Activated CD4-positive, alpha-beta T cell treated with anti-CD3 and anti-CD28 coated beads for 36 hours (primary cell): ENCODE measurements at regions of chr2 and their contacts with region 1.

Region 1: GRCh38 chr2:109690822-109691547 is 76.8 kb downstream of the SOWAHC start:
- DNase-seq: no peak
- ATAC-seq: no peak
- H3K4me3 Mint-ChIP-seq: no peak overlapping the region
- H3K27ac Mint-ChIP-seq: no peak overlapping the region
- H3K4me1 Mint-ChIP-seq: peaks cover 8% of the 10 kb centered on the region
- H3K27me3 Mint-ChIP-seq: peaks cover 14% of the 10 kb centered on the region

Region 2: DNA sequence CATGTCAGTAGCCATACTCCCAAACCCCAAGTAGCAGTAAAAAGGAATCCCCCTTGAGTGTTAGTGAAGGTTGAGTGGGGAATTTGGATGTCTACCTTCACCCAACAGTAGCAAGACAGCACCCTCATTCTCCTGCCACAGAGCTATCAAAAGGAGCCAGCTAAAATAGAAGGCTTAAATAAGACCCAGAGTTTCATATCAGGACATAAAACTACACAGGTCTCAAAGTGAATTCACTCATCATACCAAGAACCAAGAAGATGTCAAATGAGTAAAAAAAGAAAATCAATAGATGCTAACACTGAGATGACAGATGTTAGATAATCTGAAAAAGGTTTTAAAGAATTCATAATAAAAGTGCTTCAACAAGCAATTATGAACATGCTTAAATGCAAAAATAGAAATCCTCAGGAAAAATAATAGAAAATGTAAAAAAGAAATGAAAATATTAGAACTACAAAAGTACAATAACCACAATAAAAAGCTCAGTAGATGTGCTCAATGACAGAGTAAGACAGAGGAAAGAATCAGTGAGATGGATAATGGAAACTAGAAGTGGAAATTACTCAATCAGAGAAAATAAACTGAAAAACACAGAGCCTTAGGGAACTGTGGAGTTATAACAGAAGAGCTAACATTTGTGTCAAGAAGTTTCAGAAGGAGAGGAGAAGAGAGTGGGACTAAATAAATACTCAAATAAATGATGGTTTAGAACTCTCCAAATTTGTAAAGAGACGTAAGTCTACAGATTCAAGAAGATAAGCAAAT is 792.5 kb before region 1 on chr2:
- CTCF ChIA-PET with region 1: no interaction called
- POLR2A ChIA-PET with region 1: no interaction called
- intact Hi-C with region 1: no loop called
- DNase-seq: no peak
- ATAC-seq: peak; percentile 81
- H3K4me3 Mint-ChIP-seq: no peak overlapping the region
- H3K27ac Mint-ChIP-seq: peak overlapping the region; percentile 15
- H3K4me1 Mint-ChIP-seq: peaks cover 12% of the 10 kb centered on the region
- H3K27me3 Mint-ChIP-seq: no peaks in the 10 kb centered on the region

Region 3: DNA sequence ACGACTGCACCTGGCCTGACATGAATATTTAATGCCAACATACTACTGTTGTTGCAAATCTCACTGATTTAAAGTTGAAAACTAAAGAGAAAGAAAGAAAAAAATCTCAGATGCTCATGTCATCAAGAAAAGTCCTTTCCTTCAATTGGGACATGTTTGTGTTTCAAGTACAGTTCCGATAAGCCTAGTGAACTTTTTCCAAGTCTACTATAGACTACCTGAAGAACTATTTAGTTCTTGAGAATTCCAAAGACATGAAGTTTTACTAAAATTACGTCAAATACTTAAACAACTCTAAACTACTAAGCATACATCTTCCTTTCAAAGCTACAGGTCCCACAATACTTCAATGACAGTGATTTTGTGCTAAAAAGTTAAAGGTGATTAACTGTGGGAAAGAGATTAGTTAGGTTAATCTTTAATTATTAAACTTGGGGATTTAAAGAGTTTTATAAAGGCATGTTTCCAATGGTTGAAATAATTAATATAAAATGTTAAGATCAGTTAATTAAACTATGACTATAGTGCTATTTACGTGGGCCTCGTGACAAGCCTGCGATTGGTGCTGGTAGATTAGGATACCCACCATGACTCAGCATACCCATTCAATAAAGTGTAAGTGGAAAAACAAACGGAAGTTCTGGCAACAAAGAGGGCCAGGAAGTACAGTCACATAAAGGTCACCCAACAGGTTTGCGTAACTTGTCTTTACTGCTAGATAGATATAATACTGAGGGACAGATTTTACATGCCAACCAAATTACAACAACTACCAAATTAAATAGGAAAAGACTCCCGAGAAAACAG is 132.7 kb before region 1 on chr2:
- CTCF ChIA-PET with region 1: no interaction called
- POLR2A ChIA-PET with region 1: no interaction called
- intact Hi-C with region 1: loop called in 1 of 2 experiments (anchors 5 kb)
- DNase-seq: peak; percentile 21
- ATAC-seq: peak; percentile 71
- H3K4me3 Mint-ChIP-seq: no peak overlapping the region
- H3K27ac Mint-ChIP-seq: no peak overlapping the region
- H3K4me1 Mint-ChIP-seq: peaks cover 12% of the 10 kb centered on the region
- H3K27me3 Mint-ChIP-seq: no peaks in the 10 kb centered on the region

Region 4: DNA sequence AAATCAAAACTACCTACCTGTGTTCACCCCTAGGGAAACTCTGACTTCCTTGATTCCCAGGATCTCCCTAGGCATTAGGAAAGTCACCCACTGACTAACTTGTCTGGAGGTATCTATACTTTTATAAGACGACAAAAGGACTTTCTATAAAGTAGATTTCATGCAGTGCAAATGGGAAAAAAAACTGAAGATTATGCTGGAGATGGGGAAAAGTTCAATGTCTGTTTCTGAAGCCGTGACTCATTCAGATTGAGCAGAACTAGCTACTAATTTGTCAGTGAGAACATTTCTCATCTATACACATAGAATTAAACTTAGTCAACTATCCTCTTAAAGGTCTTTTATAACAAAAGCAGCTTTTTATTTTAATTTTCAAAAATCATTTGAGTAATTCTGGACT is 83.2 kb before region 1 on chr2:
- CTCF ChIA-PET with region 1: no interaction called
- POLR2A ChIA-PET with region 1: no interaction called
- intact Hi-C with region 1: no loop called
- DNase-seq: no peak
- ATAC-seq: no peak
- H3K4me3 Mint-ChIP-seq: no peak overlapping the region
- H3K27ac Mint-ChIP-seq: no peak overlapping the region
- H3K4me1 Mint-ChIP-seq: peaks cover 7% of the 10 kb centered on the region
- H3K27me3 Mint-ChIP-seq: peaks cover 45% of the 10 kb centered on the region

Region 5: GRCh38 chr2:109707281-109708147 is 16.5 kb after region 1 on chr2:
- CTCF ChIA-PET with region 1: no interaction called
- POLR2A ChIA-PET with region 1: no interaction called
- intact Hi-C with region 1: no loop called
- DNase-seq: no peak
- ATAC-seq: no peak
- H3K4me3 Mint-ChIP-seq: no peak overlapping the region
- H3K27ac Mint-ChIP-seq: no peak overlapping the region
- H3K4me1 Mint-ChIP-seq: peaks cover under 1% of the 10 kb centered on the region
- H3K27me3 Mint-ChIP-seq: no peaks in the 10 kb centered on the region

Region 6: GRCh38 chr2:110732422-110733413 is 1041.7 kb after region 1 on chr2 and contains the start of gene ACOXL:
- CTCF ChIA-PET with region 1: no interaction called
- POLR2A ChIA-PET with region 1: no interaction called
- intact Hi-C with region 1: no loop called
- DNase-seq: peak; percentile 39
- ATAC-seq: peak; percentile 30
- H3K4me3 Mint-ChIP-seq: peak within 1 kb of the TSS; percentile 24
- H3K27ac Mint-ChIP-seq: no peak within 1 kb of the TSS
- H3K4me1 Mint-ChIP-seq: peaks cover 7% of the 10 kb centered on the region
- H3K27me3 Mint-ChIP-seq: peaks cover 65% of the 10 kb centered on the region
- total RNA-seq, gene ACOXL: 0.23 TPM in 1 of 2 experiments, not detected in the other